ENCODE measurements at regions of chr11 and their contacts with region 1.

Region 1: GRCh38 chr11:70226782-70227369 is 23.8 kb downstream of the FADD start:
- DNase-seq: no peak
- ATAC-seq: no peak
- H3K4me3 ChIP-seq: no peak overlapping the region
- H3K27ac ChIP-seq: no peak overlapping the region
- H3K4me1 ChIP-seq: peaks cover 0 to 15% (median 6%) of the 10 kb centered on the region in 9 donors
- H3K27me3 ChIP-seq: no peaks in the 10 kb centered on the region
- CTCF ChIP-seq: peak in 2 of 9 donors; percentile 8 to 13

Region 2: DNA sequence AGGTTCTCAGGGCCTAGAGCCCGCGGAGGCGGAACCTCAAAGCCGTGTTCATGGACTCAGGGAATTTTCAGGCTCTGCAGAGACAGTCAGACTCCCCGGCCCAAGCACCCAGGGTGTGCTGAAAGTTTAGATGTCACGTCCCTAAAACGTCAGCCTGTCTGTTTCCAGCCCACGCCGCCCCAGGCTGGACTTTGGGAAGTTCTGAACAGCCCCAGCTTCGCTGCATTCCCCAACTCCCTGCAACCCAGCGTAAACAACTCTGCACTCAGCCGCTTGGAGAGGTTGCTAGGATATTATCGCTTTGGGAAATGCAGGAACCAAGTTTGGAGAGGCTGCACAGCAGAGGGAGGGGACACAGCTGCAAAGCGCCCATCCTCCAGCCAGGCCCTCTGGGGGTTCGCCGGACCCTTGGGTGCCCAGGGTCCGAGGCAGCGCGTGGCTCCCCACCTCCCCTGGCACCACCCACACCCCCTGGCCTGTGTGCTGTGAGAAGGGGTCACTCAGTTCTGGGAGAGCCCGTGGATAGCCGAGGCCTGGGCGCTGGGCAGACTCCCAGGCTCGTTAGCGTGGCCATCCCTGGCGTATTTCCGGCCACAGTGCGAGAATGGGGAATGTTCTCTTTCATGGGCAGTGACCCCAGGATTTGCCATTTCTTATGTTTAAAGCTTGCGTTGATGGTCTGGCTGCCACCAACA is 287.2 kb before region 1 on chr11:
- intact Hi-C with region 1: no loop called
- DNase-seq: peak; percentile 73 to 86
- ATAC-seq: peak; percentile 87 to 93 (median 92)
- H3K4me3 ChIP-seq: peak overlapping the region in 7 of 10 donors; percentile 12 to 41 (median 36)
- H3K27ac ChIP-seq: peak overlapping the region; percentile 49 to 92 (median 84)
- H3K4me1 ChIP-seq: peaks cover 0 to 25% (median 14%) of the 10 kb centered on the region in 9 donors
- H3K27me3 ChIP-seq: peaks cover 0 to 13% (median 0%) of the 10 kb centered on the region in 7 donors
- CTCF ChIP-seq: no peak

Region 3: GRCh38 chr11:70244698-70245097 is 17.8 kb after region 1 on chr11:
- intact Hi-C with region 1: loop called in 1 of 10 experiments (anchors 1 kb)
- DNase-seq: no peak
- ATAC-seq: no peak
- H3K4me3 ChIP-seq: no peak overlapping the region
- H3K27ac ChIP-seq: no peak overlapping the region
- H3K4me1 ChIP-seq: peaks cover 0 to 6% (median 0%) of the 10 kb centered on the region in 9 donors
- H3K27me3 ChIP-seq: peaks cover 0 to 11% (median 0%) of the 10 kb centered on the region in 7 donors
- CTCF ChIP-seq: no peak